Mammary epithelial cell (primary cell): ENCODE measurements at regions of chr18 and their contacts with region 1.

Region 1: GRCh38 chr18:26307189-26307773 is 81.0 kb downstream of the TAF4B start:
- DNase-seq: peak; percentile 45
- H3K4me3 ChIP-seq: no peak overlapping the region
- H3K27ac ChIP-seq: no peak overlapping the region
- H3K4me1 ChIP-seq: peaks cover 4% of the 10 kb centered on the region
- H3K27me3 ChIP-seq: no peaks in the 10 kb centered on the region
- CTCF ChIP-seq: peak; percentile 66 to 76

Region 2: GRCh38 chr18:26271917-26272549 is 35.2 kb before region 1 on chr18:
- CTCF ChIA-PET with region 1: interaction called, 11 read pairs
- dilution Hi-C with region 1: no loop called
- in situ Hi-C with region 1: no loop called
- intact Hi-C with region 1: no loop called
- DNase-seq: no peak
- H3K4me3 ChIP-seq: no peak overlapping the region
- H3K27ac ChIP-seq: no peak overlapping the region
- H3K4me1 ChIP-seq: no peaks in the 10 kb centered on the region
- H3K27me3 ChIP-seq: no peaks in the 10 kb centered on the region
- CTCF ChIP-seq: no peak

Region 3: GRCh38 chr18:26407706-26408601 is 100.7 kb after region 1 on chr18:
- CTCF ChIA-PET with region 1: no interaction called
- dilution Hi-C with region 1: no loop called
- in situ Hi-C with region 1: no loop called
- intact Hi-C with region 1: no loop called
- DNase-seq: peak; percentile 55
- H3K4me3 ChIP-seq: no peak overlapping the region
- H3K27ac ChIP-seq: peak overlapping the region; percentile 2
- H3K4me1 ChIP-seq: peaks cover 17% of the 10 kb centered on the region
- H3K27me3 ChIP-seq: no peaks in the 10 kb centered on the region
- CTCF ChIP-seq: no peak

Region 4: DNA sequence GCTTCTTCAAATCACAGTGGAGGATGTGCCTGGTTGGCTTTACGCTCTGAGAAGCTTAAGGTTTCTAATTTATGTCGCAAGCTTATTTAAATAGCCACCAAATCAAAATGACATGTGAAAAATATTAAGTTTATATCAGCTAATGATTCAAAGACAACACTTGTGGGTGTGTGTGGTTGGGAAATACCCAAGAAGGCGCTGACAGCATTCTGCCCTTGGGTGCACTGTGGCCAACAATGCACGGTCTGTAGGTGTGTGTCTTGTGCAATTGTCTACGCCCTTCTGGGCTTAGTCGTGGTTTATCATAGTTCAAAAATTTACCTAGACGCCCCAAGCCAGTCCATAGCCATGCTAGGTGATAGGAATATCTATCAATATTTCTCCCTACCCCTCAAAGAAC is 180.2 kb after region 1 on chr18:
- CTCF ChIA-PET with region 1: interaction called, 5 read pairs
- dilution Hi-C with region 1: no loop called
- in situ Hi-C with region 1: no loop called
- intact Hi-C with region 1: loop called (anchors 10 kb)
- DNase-seq: peak; percentile 96
- H3K4me3 ChIP-seq: no peak overlapping the region
- H3K27ac ChIP-seq: peak overlapping the region; percentile 98
- H3K4me1 ChIP-seq: peaks cover 67% of the 10 kb centered on the region
- H3K27me3 ChIP-seq: no peaks in the 10 kb centered on the region
- CTCF ChIP-seq: no peak

Region 5: DNA sequence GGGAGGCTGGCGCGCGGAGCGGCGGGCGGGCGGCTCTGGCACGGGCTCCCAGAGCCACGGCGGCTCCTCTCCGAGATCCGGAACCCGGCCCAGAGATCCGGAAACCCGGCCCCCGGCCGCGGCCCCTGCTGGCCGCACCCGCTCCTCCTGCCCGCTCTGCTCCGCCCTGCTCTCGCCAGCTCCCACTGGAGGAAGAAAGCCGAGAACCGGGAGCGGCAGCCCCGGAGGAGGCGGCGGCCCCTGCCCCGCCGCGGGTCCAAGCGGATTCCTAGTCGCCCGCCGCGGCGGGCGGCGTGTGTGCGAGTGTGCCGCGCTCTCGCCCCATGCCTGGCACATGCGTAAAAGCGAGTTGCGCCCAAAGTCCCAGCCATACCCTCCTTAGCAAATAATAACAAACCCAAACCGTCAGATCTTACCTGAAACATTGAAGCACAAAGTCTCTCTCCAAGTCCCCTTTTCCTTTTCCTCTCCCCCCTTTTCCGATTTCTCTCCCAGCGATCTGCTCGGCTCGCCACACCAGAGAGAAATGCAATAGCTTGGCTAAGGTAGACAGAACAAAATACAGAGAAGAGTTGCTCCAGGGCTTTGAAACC is 349.8 kb after region 1 on chr18:
- CTCF ChIA-PET with region 1: no interaction called
- dilution Hi-C with region 1: no loop called
- in situ Hi-C with region 1: loop called in 1 of 2 experiments (anchors 10 kb)
- intact Hi-C with region 1: no loop called
- DNase-seq: peak; percentile 73
- H3K4me3 ChIP-seq: peak overlapping the region; percentile 56 to 79 (median 69)
- H3K27ac ChIP-seq: peak overlapping the region; percentile 11
- H3K4me1 ChIP-seq: peaks cover 16% of the 10 kb centered on the region
- H3K27me3 ChIP-seq: peaks cover 28% of the 10 kb centered on the region
- CTCF ChIP-seq: peak in 1 of 2 donors; percentile 39

Region 6: DNA sequence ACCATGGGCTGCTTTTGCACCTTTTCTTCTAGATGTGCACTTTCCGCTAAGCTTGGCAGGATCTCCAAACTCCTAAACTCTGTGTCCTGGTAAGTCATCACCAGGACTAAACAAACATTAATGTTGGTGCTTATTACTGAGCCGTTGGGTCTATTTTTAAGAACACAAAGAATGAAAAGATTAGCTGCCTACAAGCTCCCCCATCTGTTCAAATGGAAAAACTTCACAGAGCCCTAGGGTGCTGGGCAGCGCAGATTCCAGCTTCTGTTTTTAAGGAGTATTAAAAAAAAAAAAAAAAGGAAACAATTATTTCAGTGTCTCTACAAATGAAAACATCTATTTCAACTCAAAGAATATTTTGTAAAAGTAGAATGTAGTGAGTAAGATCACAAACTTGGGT is 656.0 kb after region 1 on chr18:
- CTCF ChIA-PET with region 1: no interaction called
- dilution Hi-C with region 1: no loop called
- in situ Hi-C with region 1: no loop called
- intact Hi-C with region 1: loop called (anchors 5 kb)
- DNase-seq: peak; percentile 28
- H3K4me3 ChIP-seq: no peak overlapping the region
- H3K27ac ChIP-seq: no peak overlapping the region
- H3K4me1 ChIP-seq: no peaks in the 10 kb centered on the region
- H3K27me3 ChIP-seq: no peaks in the 10 kb centered on the region
- CTCF ChIP-seq: peak in 1 of 2 donors; percentile 38